Esophagus squamous epithelium (tissue), 5 donors: ENCODE measurements at regions of chr11 and their contacts with region 1.

Region 1: DNA sequence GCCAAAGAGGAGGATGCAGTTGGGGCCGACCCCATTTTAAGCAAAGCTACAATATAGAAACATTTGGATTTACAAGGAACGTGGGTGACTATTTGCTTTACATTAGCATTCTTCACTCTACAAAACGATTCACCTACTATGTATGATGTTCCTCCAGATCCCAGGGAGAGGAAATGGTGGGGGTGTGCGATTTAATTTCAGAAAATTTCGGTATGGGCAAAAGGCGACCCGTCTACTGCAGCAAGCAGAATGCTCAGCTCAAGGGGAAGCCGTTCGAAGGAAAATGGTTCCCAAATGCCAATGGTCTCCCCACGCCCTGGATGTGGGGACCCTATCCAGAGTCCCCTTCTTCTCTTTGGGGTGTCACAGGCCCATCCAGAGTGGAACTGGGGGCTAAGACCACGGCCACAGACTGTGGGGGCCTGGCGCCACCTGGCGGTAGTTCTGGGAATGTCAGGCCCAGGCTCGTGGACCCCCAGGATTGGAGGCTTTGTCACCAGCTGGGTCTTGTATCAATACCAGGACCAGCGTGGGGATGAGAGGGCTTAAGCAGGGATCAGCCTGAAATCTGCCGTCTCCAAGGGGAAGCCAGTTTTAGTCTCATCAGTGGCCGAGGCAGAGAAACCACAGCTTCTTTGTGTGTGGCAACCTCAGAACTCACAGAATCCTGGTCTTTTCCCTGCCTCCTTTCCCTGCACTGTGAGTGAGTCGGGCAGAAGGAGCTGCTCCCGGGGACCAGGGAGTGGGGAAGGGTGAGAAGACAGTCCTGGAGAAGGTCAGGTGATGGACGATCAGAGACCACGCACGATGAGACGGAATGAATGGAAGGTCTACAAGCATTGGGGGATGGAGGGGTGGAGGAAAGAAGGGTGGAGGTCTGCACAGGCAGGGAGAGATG is 8.4 kb downstream of the LRRC10B start:
- DNase-seq: no peak
- H3K4me3 ChIP-seq: peak overlapping the region in 1 of 4 donors; percentile 23
- H3K27ac ChIP-seq: no peak overlapping the region
- H3K4me1 ChIP-seq: peaks cover 3 to 20% (median 9%) of the 10 kb centered on the region in 3 donors
- H3K27me3 ChIP-seq: peaks cover 0 to 62% (median 0%) of the 10 kb centered on the region in 4 donors
- CTCF ChIP-seq: peak; percentile 75 to 98 (median 88)
- POLR2A ChIP-seq: no peak

Region 2: DNA sequence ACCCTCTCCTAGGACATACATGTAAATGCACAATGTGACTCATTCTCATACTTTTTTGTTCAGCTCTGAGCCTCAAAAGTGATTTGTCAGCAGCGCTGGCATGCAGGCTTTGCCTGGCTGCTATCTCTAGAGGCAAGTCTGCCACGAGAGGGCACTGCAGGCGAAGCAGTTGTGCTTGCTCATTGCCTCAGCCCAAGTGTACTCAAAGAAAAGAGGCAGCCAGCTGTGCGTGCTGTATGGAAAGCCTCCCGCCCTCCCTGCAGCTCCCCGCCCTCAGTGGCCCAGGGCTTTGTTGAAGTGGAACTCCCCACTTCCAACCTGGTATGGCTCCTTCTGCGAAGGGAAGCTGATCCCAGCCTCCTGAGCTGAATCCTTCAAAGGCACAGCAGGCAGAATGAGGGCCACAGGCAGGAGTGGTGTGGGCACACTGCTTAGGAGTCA is 70.7 kb before region 1 on chr11:
- intact Hi-C with region 1: loop called (anchors 5 kb)
- DNase-seq: peak; percentile 6
- H3K4me3 ChIP-seq: no peak overlapping the region
- H3K27ac ChIP-seq: peak overlapping the region in 2 of 4 donors; percentile 30 to 62
- H3K4me1 ChIP-seq: peaks cover 4 to 9% (median 5%) of the 10 kb centered on the region in 3 donors
- H3K27me3 ChIP-seq: no peaks in the 10 kb centered on the region
- CTCF ChIP-seq: peak; percentile 73 to 92 (median 76)
- POLR2A ChIP-seq: no peak

Region 3: DNA sequence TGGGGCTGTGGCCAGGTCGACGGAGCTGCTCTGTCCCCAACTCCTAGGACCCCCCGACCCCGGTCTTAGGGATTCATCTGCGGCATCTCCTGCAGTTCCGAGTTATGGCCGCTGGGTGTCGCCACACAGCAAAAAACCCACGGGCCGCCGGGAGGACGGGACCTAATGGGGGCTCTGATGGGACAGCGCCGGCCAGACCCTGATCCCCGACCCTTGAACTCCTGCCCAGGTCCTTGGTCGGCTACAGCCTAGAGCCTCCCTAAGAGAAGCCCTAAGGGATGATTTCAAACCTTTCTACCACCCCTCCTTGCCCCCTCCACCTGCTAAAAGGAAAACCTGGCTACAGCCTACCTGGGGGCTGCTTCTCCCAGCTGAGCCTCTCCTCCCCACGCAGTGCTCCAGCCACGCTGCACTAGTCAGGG is 39.2 kb before region 1 on chr11:
- intact Hi-C with region 1: loop called (anchors 5 kb)
- DNase-seq: no peak
- H3K4me3 ChIP-seq: no peak overlapping the region
- H3K27ac ChIP-seq: peak overlapping the region in 1 of 4 donors; percentile 17
- H3K4me1 ChIP-seq: peaks cover 0 to 14% (median 8%) of the 10 kb centered on the region in 3 donors
- H3K27me3 ChIP-seq: peaks cover 0 to 36% (median 0%) of the 10 kb centered on the region in 4 donors
- CTCF ChIP-seq: peak; percentile 81 to 93 (median 86)
- POLR2A ChIP-seq: no peak